Sigmoid colon (tissue), 7 donors: ENCODE measurements at regions of chr9 and their contacts with region 1.

Region 1: GRCh38 chr9:96654443-96655197 is 497 bp downstream of the PRXL2C start:
- DNase-seq: peak; percentile 92
- H3K4me3 ChIP-seq: peak overlapping the region; percentile 46 to 80 (median 68)
- H3K27ac ChIP-seq: peak overlapping the region; percentile 98 to 99 (median 98)
- H3K4me1 ChIP-seq: peaks cover 0 to 16% (median 8%) of the 10 kb centered on the region in 4 donors
- H3K27me3 ChIP-seq: no peaks in the 10 kb centered on the region
- CTCF ChIP-seq: no peak
- EP300 ChIP-seq: peak in 2 of 4 donors; percentile 9 to 44
- POLR2A ChIP-seq: no peak

Region 2: GRCh38 chr9:96344458-96345180 is 310.0 kb before region 1 on chr9:
- intact Hi-C with region 1: loop called (anchors 5 kb)
- DNase-seq: peak; percentile 87
- H3K4me3 ChIP-seq: no peak overlapping the region
- H3K27ac ChIP-seq: peak overlapping the region; percentile 50 to 70 (median 58)
- H3K4me1 ChIP-seq: peaks cover 0 to 33% (median 22%) of the 10 kb centered on the region in 4 donors
- H3K27me3 ChIP-seq: no peaks in the 10 kb centered on the region
- CTCF ChIP-seq: no peak
- EP300 ChIP-seq: no peak
- POLR2A ChIP-seq: no peak

Region 3: DNA sequence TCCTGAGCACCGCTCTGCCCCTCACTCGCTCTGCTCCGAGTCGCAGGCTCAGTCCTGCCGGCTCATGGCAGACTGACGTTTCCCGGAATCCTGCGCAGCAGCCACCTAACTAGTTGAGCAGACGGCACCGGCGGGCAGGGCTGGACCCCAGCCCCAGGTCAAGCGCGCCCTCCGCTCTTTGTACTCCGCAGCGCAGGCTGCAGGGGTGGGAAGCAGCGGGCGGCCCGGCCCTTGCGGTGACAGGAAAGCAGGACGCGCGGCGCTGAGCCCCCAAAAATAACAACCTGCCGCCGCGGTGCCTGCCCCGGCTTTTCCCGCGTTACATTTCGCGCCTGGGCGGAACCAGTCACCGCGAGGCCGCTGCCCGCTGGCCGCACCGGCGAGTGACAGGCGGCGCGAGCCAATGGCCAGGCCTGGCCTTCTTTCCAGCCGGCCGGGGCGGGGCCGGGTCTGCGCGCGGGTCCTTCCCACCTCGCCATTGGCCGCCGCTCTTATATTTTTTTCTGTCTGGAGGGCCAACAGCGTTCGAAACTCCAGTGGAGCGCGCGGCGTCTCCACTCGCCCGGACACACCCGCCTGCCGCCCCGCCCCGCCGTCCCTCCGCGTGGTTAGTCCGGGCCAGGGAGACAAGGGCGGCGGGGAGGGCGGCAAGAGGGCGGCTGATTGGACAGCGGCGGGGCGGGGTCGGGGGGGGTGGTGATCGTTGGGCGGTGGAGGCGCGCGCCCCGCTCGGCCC is 236.4 kb before region 1 on chr9 and contains the start of gene ZNF367:
- intact Hi-C with region 1: loop called (anchors 2 kb)
- DNase-seq: peak; percentile 99
- H3K4me3 ChIP-seq: peak within 1 kb of the TSS; percentile 66 to 92 (median 82)
- H3K27ac ChIP-seq: peak within 1 kb of the TSS; percentile 98 to 100 (median 98)
- H3K4me1 ChIP-seq: peaks cover 0 to 37% (median 28%) of the 10 kb centered on the region in 4 donors
- H3K27me3 ChIP-seq: no peaks in the 10 kb centered on the region
- CTCF ChIP-seq: no peak
- EP300 ChIP-seq: no peak
- POLR2A ChIP-seq: no peak
- total RNA-seq, gene ZNF367: 0.28 to 1.4 (median 1.3) TPM

Region 4: GRCh38 chr9:96449845-96450612 is 204.6 kb before region 1 on chr9 and contains the start of gene HABP4:
- intact Hi-C with region 1: loop called (anchors 5 kb)
- DNase-seq: peak; percentile 98
- H3K4me3 ChIP-seq: peak within 1 kb of the TSS; percentile 72 to 79 (median 76)
- H3K27ac ChIP-seq: peak within 1 kb of the TSS; percentile 86 to 92 (median 92)
- H3K4me1 ChIP-seq: peaks cover 0 to 20% (median 8%) of the 10 kb centered on the region in 4 donors
- H3K27me3 ChIP-seq: no peaks in the 10 kb centered on the region
- CTCF ChIP-seq: no peak
- EP300 ChIP-seq: no peak
- POLR2A ChIP-seq: no peak
- total RNA-seq, gene HABP4: 12.5 to 23.5 (median 18.6) TPM

Region 5: GRCh38 chr9:96566498-96567207 is 88.0 kb before region 1 on chr9:
- intact Hi-C with region 1: loop called (anchors 1 kb)
- DNase-seq: peak; percentile 88
- H3K4me3 ChIP-seq: peak overlapping the region; percentile 55 to 83 (median 78)
- H3K27ac ChIP-seq: peak overlapping the region; percentile 86 to 90 (median 88)
- H3K4me1 ChIP-seq: peaks cover 0 to 24% (median 11%) of the 10 kb centered on the region in 4 donors
- H3K27me3 ChIP-seq: no peaks in the 10 kb centered on the region
- CTCF ChIP-seq: peak; percentile 31 to 63 (median 44)
- EP300 ChIP-seq: no peak
- POLR2A ChIP-seq: no peak

Region 6: GRCh38 chr9:96619491-96620154 is 35.0 kb before region 1 on chr9 and contains the start of gene CDC14B:
- intact Hi-C with region 1: loop called (anchors 2 kb)
- DNase-seq: peak; percentile 96
- H3K4me3 ChIP-seq: peak within 1 kb of the TSS; percentile 45 to 92 (median 77)
- H3K27ac ChIP-seq: peak within 1 kb of the TSS; percentile 75 to 90 (median 82)
- H3K4me1 ChIP-seq: peaks cover 0 to 15% (median 6%) of the 10 kb centered on the region in 4 donors
- H3K27me3 ChIP-seq: no peaks in the 10 kb centered on the region
- CTCF ChIP-seq: no peak
- EP300 ChIP-seq: no peak
- POLR2A ChIP-seq: no peak
- total RNA-seq, gene CDC14B: 12.5 to 35.7 (median 17.6) TPM

Region 7: DNA sequence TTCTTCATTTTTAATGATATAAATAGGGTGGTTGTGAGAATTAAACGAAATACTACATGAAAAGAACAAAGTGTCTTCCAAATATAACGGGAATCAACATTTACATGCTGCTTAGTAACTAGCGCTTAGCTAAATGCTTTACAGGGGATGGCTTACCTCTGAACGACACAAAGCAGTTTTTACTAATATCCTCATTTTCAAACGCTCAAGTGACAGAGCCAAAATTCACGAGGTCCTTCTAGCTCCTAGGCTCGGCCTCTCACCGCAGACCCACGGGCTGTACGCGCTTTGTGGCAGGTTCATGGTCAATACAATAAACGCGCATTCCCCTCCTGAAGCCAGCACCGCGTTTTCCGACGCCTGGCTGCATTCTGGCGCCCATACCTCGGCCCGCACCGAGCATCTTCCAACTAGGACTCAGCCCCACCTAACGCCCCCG is 122.8 kb after region 1 on chr9:
- intact Hi-C with region 1: loop called (anchors 2 kb)
- DNase-seq: no peak
- H3K4me3 ChIP-seq: peak overlapping the region; percentile 61 to 91 (median 74)
- H3K27ac ChIP-seq: peak overlapping the region; percentile 81 to 84 (median 84)
- H3K4me1 ChIP-seq: peaks cover 0 to 20% (median 10%) of the 10 kb centered on the region in 4 donors
- H3K27me3 ChIP-seq: no peaks in the 10 kb centered on the region
- CTCF ChIP-seq: no peak
- EP300 ChIP-seq: no peak
- POLR2A ChIP-seq: no peak

Region 8: DNA sequence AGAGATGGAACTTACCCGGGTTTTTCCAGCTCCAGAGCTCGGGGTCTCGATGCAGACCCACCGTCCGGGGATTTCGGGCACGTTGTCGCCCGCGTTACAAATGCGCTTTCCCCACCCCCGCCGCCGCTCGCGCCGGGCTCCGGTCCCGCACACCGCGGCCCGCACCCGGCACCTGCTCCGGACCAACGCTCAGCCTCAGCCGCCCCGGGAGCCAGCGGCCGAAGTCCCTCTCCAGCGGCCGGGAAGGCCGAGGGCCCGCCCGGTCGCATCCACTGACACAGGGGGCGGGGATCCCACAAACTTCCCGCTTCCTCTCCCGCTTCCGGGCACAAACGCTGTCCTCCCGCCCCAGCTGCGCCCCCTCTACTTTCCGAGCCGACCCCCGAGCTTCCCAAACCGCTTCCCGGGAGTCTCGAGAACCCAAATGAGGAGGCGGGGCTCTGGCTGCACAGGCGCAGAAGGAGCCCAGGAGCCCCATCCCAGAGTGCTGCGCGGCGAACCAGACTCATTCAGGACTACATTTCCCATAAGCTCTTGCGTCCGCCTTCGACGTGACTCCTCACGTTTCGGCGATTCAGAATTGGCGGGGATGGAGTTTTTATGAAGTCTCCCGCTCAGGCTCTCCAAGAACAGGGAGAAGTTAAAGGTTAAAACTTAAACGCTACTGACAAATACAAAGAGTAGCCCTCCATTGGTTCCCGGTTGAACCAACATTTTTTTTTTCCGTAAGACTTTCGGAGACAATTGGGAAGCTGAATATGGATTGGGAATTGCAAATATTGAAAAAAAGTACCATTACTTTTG is 199.7 kb after region 1 on chr9 and contains the start of gene ZNF782:
- intact Hi-C with region 1: no loop called
- DNase-seq: peak; percentile 95
- H3K4me3 ChIP-seq: peak within 1 kb of the TSS; percentile 77 to 86 (median 82)
- H3K27ac ChIP-seq: peak within 1 kb of the TSS; percentile 84 to 89 (median 88)
- H3K4me1 ChIP-seq: peaks cover 0 to 35% (median 24%) of the 10 kb centered on the region in 4 donors
- H3K27me3 ChIP-seq: no peaks in the 10 kb centered on the region
- CTCF ChIP-seq: no peak
- EP300 ChIP-seq: peak in 1 of 4 donors; percentile 6
- POLR2A ChIP-seq: peak in 1 of 2 donors; percentile 42
- total RNA-seq, gene ZNF782: 11.4 to 18.2 (median 15.7) TPM

Region 9: DNA sequence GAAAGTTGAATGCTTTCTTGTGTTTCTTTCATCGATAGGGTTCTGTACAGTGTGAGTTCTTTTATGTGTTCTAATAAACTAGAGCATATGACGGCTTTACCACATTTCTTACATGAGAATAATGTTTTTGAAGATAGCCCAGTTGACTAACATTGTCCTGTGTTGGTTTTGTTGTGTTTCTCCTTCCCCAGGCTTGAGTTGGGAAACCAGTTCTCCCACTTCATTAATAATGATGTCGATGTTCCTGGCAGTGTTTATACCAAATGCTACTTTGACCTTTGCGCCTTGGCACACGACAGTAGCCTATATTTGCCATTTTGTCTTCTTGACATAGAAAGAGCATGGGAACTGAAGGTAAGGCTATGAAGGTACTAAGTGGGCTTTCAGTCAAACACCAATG is 214.1 kb after region 1 on chr9:
- intact Hi-C with region 1: no loop called
- DNase-seq: no peak
- H3K4me3 ChIP-seq: no peak overlapping the region
- H3K27ac ChIP-seq: no peak overlapping the region
- H3K4me1 ChIP-seq: no peaks in the 10 kb centered on the region
- H3K27me3 ChIP-seq: no peaks in the 10 kb centered on the region
- CTCF ChIP-seq: no peak
- EP300 ChIP-seq: no peak
- POLR2A ChIP-seq: no peak